Right ventricle myocardium inferior (tissue), 1 donor: ENCODE measurements at regions of chr5 and their contacts with region 1.

Region 1: GRCh38 chr5:36606428-36607113 is at the start of gene SLC1A3:
- DNase-seq: no peak
- ATAC-seq: peak; percentile 89
- total RNA-seq, gene SLC1A3: 95.4 TPM

Region 2: DNA sequence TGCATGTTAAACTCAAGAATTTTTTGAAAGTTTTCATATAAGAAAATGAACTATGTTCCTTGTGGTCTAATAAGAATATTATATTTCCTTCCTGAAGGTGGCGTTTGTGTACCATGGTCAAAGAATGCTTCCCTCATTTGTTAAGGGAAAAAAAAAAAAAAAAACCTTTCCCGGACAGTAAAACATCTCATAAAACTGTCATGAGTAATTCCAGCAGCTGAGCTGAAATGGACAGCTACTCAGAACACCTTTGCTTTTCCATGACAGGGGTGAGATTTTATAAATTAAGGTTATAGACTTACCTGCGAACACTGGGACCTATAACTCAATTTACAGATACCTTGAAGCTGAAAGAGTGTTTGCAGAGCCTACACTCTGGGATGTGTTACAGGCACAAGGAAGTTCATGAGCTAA is 191.7 kb before region 1 on chr5:
- intact Hi-C with region 1: loop called (anchors 5 kb)
- DNase-seq: no peak
- ATAC-seq: peak; percentile 57

Region 3: DNA sequence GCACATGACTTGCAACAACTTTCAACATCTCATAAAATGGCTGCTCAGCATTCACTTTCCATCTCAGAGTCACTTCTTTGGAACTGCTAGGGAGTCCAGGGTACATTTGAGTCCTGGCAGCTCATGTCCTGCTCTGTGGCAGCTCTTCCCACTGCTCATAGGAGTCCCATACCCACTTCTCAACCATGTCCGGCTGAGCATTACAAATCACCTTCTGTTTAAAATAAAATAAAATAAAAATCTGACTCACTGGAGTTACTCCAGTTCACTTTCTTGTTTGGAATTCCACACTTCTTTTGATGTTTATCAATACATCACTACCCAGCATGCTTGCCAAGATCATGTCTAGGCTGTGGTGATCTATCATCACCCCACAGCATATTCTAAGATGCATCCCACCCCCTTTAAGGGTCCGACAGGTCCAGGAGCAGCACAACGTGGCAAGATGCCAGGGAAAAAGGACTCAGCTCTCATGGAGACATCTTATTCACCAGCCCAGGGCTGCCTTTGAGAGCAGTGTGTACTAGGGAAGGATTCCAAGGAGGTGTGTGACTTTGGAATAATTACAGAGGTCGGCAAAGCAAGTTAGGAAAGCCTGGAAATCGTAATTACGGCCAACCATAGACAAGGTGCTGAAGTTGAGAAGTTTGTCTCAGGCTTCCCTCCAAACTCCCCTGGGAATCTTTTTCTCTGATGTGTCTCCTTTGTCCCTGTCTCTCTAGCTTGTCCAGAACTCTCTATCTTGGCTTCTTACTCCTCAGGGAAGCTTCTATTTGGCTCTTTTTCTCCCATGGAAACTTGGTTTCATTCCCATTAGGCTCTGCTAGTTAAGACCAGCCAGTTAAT is 111.6 kb before region 1 on chr5:
- intact Hi-C with region 1: no loop called
- DNase-seq: no peak
- ATAC-seq: no peak

Region 4: DNA sequence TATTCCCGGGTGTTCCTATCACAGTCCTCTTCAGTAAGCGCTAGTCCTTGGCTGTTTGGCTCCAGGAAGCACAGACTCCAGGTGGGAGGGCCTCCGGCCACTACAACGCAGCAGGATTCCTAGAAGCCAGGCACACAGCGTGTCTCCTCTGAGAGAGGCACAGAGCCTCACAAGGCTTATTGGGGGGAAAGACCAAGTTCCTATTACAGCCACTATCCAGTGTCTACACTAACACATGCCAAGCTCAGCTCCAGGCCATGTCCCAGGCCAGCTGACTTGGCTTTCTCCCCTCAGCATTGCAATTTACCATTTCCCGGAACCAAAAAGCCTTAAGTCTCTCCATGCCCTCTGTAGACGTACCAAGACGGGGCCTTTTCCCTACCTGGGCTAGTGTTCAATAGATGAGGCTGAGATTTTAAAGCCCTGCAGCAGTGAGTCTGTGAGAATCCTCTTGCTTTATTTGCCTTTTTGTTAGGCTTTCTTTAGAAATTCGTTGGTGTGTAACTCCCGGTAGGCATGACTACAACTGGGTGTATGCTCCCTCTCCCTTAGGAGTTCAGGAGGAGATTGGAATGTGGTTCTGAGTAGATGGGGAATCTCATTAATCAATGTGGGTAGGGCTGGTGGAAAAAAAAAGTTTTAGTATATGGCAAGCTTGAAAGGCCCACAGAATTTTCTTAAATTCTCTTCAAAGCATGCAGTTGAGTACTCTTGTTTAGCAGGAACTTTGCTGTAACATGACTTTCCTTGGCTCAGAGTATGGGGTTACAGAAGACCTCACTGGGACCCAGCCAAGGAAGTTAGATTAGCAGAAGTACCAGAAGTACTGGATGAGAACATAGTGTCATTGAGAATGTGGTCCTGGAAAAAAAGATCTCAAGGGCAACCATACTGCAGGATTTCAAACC is 84.5 kb before region 1 on chr5:
- intact Hi-C with region 1: loop called (anchors 5 kb)
- DNase-seq: no peak
- ATAC-seq: peak; percentile 90

Region 5: DNA sequence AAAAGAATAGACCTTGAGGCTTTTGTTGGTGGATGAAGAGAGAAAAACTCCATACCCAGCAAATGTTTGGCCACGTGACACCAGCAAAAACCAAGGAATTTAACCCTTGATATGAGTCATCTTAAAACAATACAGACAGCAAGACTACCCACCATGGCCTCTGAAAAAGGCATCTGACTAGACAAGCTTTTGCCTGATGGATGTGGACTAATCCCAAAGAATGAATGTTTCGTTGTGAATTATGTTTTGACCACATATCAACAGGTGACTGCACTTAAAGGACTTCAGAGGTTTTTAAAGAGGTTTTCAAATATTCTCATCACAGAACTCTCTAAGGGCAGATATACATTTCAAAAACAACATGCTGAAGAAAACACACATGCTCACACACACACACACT is 33.1 kb before region 1 on chr5:
- intact Hi-C with region 1: loop called (anchors 5 kb)
- DNase-seq: no peak
- ATAC-seq: no peak

Region 6: DNA sequence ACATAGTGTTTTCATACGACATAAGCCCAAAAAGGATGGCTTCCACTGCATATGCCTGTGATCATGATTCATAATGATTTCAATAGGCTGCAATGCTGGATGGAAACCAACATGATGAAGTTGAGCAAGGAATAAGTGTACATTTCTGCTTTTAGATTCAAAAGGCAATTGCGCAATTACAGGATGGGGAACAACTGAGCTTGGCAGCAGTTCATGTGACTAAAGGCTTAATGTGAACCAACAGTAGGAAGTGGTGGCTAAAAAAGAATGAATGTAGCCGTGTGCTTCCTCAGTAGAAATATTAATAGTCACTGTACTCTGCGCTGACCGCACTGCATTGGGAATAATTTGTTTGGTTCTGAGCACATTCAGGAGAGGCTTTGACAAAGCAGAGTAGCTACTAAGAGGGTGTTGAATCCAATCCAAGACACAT is 51.0 kb after region 1 on chr5:
- intact Hi-C with region 1: loop called (anchors 5 kb)
- DNase-seq: no peak
- ATAC-seq: peak; percentile 93

Region 7: DNA sequence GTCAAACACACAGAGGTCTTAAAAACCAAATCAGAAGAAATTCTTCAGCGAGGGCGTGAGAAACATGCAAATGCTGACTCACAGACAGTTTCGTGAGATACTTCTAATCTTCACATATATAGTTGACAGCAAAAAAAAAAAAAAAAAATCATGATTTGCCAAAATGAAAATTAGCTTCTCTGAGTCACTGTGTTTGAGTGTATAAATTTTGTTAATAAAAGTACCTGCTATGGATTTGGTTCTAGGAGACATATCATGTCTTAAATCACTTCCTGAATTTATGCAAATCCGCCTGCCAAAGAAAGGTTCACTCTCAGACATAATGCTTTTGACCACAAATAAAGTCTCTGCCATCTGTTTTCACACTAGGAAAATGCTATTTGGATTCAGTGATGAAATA is 114.1 kb after region 1 on chr5:
- intact Hi-C with region 1: no loop called
- DNase-seq: no peak
- ATAC-seq: no peak